Ovary (tissue), 10 donors: ENCODE measurements at regions of chr11 and their contacts with region 1.

Region 1: GRCh38 chr11:126115816-126116331 is 53.2 kb upstream of the CDON start:
- DNase-seq: peak in 3 of 5 donors; percentile 62 to 82 (median 71)
- H3K4me3 ChIP-seq: no peak overlapping the region
- H3K27ac ChIP-seq: peak overlapping the region in 1 of 2 donors; percentile 66
- H3K4me1 ChIP-seq: peaks cover 26% of the 10 kb centered on the region
- H3K27me3 ChIP-seq: no peaks in the 10 kb centered on the region
- CTCF ChIP-seq: peak in 1 of 3 donors; percentile 30
- EP300 ChIP-seq: peak; percentile 16
- POLR2A ChIP-seq: peak; percentile 13

Region 2: GRCh38 chr11:125675196-125675595 is 440.7 kb before region 1 on chr11:
- intact Hi-C with region 1: no loop called
- DNase-seq: no peak
- H3K4me3 ChIP-seq: no peak overlapping the region
- H3K27ac ChIP-seq: no peak overlapping the region
- H3K4me1 ChIP-seq: no peaks in the 10 kb centered on the region
- H3K27me3 ChIP-seq: no peaks in the 10 kb centered on the region
- CTCF ChIP-seq: no peak
- EP300 ChIP-seq: no peak
- POLR2A ChIP-seq: no peak

Region 3: GRCh38 chr11:126139111-126140091 is 23.5 kb after region 1 on chr11:
- intact Hi-C with region 1: loop called in 1 of 4 experiments (anchors 1 kb)
- DNase-seq: peak; percentile 63 to 86 (median 73)
- H3K4me3 ChIP-seq: no peak overlapping the region
- H3K27ac ChIP-seq: peak overlapping the region in 1 of 2 donors; percentile 88
- H3K4me1 ChIP-seq: peaks cover 47% of the 10 kb centered on the region
- H3K27me3 ChIP-seq: no peaks in the 10 kb centered on the region
- CTCF ChIP-seq: no peak
- EP300 ChIP-seq: no peak
- POLR2A ChIP-seq: no peak